Head of caudate nucleus (tissue), 42 donors: ENCODE measurements at regions of chr1 and their contacts with region 1.

Region 1: DNA sequence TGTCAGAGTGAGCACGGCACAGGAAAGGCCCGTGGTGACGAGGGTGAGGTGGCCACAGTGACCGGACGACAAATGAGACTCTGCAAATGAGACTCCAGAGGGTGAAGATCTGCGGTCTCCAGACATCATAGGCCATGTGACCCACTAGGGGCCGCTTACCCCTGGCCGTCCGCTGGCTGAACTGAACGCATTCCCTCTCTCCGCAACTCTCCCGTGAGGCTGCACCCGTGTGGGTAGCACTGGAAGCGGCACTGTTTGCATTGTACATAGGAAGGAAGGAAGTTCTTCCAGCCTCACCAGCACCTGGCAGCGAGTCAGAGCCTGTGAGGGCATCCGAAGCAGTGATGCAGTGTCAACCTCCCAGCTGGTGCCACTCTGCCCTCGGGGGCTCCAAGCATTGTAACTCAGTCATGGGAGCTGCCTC is 23.6 kb upstream of the SPSB1 start:
- DNase-seq: peak in 1 of 42 donors; percentile 32

Region 2: GRCh38 chr1:9455487-9456234 is 186.6 kb after region 1 on chr1:
- intact Hi-C with region 1: loop called (anchors 5 kb)
- DNase-seq: peak; percentile 59 to 94 (median 82)

Region 3: DNA sequence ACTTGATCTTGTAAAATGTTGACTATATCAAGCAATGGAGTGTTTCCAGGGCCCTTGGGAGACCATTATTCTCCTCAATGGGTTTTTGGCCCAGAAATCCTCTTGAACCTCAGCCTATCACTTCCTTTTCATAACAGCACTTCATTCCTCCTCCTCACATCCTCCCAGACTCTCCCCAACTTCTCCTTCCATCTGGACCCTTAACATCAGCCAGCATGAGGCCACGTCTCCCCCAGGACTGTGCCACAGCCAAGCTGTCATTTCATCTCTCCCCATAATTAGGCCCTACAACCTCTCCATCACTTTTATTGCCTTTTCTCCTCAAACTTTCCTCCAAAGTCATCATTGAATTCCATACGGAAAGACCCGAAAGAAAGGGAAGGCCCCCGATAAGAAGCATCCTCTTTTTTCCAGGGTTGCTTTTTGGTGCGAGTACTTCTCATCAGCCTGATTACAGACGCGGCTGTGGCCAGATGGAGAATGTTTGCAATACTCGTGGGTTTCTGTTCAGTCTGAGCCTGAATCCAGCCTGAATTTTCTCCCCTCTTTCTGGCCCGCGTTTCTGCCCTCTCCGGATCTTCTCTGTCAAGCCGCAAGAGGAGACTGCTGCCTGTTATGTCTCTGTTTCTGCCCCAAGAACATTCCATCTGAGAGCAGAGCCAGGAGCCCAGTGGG is 217.5 kb after region 1 on chr1:
- intact Hi-C with region 1: loop called (anchors 10 kb)
- DNase-seq: no peak